Mammary epithelial cell (primary cell): ENCODE measurements at regions of chr12 and their contacts with region 1.

Region 1: DNA sequence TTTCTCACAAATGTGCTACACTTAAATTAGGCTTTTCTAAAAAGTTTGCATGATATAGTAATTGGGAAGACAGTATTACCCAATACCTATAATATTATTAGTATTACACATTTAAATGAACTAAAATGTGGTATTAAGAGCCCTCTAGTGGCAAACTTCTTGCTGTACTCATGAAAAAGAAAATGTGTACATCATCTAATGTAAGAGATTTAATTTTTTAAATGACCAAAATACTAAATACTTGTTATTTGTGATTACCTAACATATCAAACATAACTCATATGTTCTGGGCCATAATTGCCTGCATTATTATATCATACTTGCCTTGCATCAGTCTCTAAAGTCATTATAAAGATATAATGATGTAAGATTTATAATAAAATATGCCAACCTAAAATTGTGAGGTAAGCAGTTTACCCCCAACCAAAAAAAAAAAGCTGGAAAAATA is 64.2 kb downstream of the DNAI7 start:
- DNase-seq: peak; percentile 26
- H3K4me3 ChIP-seq: no peak overlapping the region
- H3K27ac ChIP-seq: no peak overlapping the region
- H3K4me1 ChIP-seq: peaks cover 12% of the 10 kb centered on the region
- H3K27me3 ChIP-seq: no peaks in the 10 kb centered on the region
- CTCF ChIP-seq: peak; percentile 49 to 56

Region 2: DNA sequence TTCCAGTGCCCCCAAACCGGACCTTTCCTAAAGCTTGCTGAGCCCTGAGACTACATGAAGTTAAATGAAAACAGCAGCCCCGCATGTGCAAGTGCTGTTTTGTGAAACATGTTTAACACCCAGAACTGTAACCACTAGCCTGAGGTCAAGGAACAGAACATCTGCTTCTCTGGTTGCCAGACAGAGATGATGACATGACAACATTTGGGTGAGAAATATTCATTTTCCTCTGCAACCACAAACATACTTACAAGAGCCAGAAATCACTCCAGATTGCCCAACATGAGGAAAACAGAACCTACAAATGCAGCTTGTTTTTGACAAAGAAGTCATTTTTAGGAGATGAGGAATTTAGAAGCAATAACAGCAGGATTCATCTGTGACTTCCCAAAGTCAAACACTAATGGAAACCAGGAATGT is 292.2 kb before region 1 on chr12:
- CTCF ChIA-PET with region 1: no interaction called
- dilution Hi-C with region 1: no loop called
- in situ Hi-C with region 1: loop called in 1 of 2 experiments (anchors 25 kb)
- intact Hi-C with region 1: no loop called
- DNase-seq: peak; percentile 35
- H3K4me3 ChIP-seq: no peak overlapping the region
- H3K27ac ChIP-seq: no peak overlapping the region
- H3K4me1 ChIP-seq: no peaks in the 10 kb centered on the region
- H3K27me3 ChIP-seq: no peaks in the 10 kb centered on the region
- CTCF ChIP-seq: no peak

Region 3: GRCh38 chr12:24852420-24852819 is 278.3 kb before region 1 on chr12:
- CTCF ChIA-PET with region 1: interaction called, 26 read pairs
- dilution Hi-C with region 1: no loop called
- in situ Hi-C with region 1: loop called in 1 of 2 experiments (anchors 25 kb)
- intact Hi-C with region 1: loop called (anchors 2 kb)
- DNase-seq: no peak
- H3K4me3 ChIP-seq: no peak overlapping the region
- H3K27ac ChIP-seq: no peak overlapping the region
- H3K4me1 ChIP-seq: peaks cover 5% of the 10 kb centered on the region
- H3K27me3 ChIP-seq: no peaks in the 10 kb centered on the region
- CTCF ChIP-seq: peak; percentile 34 to 56

Region 4: DNA sequence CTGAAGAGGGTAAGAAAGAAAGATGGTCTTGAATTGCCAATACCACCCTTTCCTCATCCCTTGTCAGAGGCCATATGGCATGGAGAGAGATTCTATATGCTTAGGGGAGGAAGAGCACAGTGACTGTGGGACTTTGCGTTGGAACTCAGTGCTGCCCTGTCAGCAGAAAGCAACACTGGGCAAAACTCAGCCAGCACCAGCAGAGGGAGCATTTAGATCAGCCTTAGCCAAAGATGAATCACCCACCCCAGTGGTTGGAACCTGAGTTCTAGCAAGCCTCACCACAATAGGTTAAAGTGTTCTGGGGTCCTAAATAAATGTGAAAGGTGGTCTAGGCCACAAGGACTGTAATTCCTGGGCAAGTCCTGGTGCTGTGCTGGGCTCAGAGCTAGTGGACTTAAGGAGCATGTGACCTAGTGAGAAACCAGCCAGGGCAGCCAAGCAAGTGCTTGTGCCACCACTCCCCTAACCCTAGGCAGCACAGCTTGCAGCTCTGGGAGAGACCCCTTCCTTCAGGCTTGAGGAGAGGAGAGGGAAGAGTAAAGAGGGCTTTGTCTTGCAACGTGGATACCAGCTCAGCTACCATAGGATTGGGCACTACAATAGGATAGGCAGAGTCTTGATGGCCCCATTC is 170.4 kb before region 1 on chr12:
- CTCF ChIA-PET with region 1: no interaction called
- dilution Hi-C with region 1: no loop called
- in situ Hi-C with region 1: no loop called
- intact Hi-C with region 1: loop called (anchors 1 kb)
- DNase-seq: peak; percentile 52
- H3K4me3 ChIP-seq: no peak overlapping the region
- H3K27ac ChIP-seq: no peak overlapping the region
- H3K4me1 ChIP-seq: no peaks in the 10 kb centered on the region
- H3K27me3 ChIP-seq: no peaks in the 10 kb centered on the region
- CTCF ChIP-seq: peak; percentile 81 to 84

Region 5: DNA sequence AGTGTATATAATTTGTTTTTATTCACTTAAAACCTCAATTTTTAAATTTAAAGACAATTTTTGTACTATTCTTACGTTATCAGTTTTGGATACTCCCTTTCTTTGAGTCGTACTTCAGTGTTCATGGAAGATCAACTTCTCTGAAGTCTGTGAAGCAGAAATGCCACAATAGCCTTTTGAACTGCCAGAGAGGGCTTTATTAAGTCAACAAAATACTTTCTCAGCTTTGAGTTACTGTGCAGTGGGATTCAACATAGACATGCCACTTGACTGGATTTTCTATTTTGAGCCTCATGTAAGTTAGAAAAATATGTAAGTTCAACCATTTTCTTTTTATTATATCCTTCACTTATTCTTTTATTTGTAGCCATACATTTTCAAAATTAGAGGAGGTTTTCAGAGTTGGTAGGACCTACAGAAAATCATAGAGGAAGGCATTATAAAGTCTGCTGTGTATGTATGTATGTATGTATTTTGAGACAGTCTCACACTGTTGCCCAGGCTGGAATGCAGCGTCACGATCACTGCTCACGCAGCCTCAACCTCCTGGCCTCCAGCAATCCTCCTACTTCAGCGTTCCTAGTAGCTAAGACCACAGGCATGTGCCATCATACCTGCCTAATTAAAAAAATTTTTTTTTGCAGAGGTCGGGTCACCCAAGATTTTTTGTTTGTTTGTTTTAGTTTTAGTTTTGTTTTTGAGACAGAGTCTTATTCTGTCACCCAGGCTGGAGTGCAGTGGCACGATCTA is 150.6 kb before region 1 on chr12:
- CTCF ChIA-PET with region 1: no interaction called
- dilution Hi-C with region 1: no loop called
- in situ Hi-C with region 1: loop called in 1 of 2 experiments (anchors 10 kb)
- intact Hi-C with region 1: no loop called
- DNase-seq: no peak
- H3K4me3 ChIP-seq: no peak overlapping the region
- H3K27ac ChIP-seq: no peak overlapping the region
- H3K4me1 ChIP-seq: no peaks in the 10 kb centered on the region
- H3K27me3 ChIP-seq: no peaks in the 10 kb centered on the region
- CTCF ChIP-seq: no peak

Region 6: GRCh38 chr12:24991209-24992049 is 139.3 kb before region 1 on chr12:
- CTCF ChIA-PET with region 1: interaction called, 3 read pairs
- dilution Hi-C with region 1: no loop called
- in situ Hi-C with region 1: loop called (anchors 5 to 10 kb)
- intact Hi-C with region 1: loop called (anchors 1 kb)
- DNase-seq: peak; percentile 50
- H3K4me3 ChIP-seq: no peak overlapping the region
- H3K27ac ChIP-seq: no peak overlapping the region
- H3K4me1 ChIP-seq: no peaks in the 10 kb centered on the region
- H3K27me3 ChIP-seq: no peaks in the 10 kb centered on the region
- CTCF ChIP-seq: peak; percentile 34 to 57

Region 7: GRCh38 chr12:25151476-25151875 is 20.7 kb after region 1 on chr12:
- CTCF ChIA-PET with region 1: interaction called, 7 read pairs
- dilution Hi-C with region 1: no loop called
- in situ Hi-C with region 1: no loop called
- intact Hi-C with region 1: loop called (anchors 2 kb)
- DNase-seq: peak; percentile 86
- H3K4me3 ChIP-seq: no peak overlapping the region
- H3K27ac ChIP-seq: no peak overlapping the region
- H3K4me1 ChIP-seq: peaks cover 6% of the 10 kb centered on the region
- H3K27me3 ChIP-seq: no peaks in the 10 kb centered on the region
- CTCF ChIP-seq: no peak

Region 8: GRCh38 chr12:25208554-25208953 is 77.8 kb after region 1 on chr12:
- CTCF ChIA-PET with region 1: no interaction called
- dilution Hi-C with region 1: no loop called
- in situ Hi-C with region 1: no loop called
- intact Hi-C with region 1: no loop called
- DNase-seq: no peak
- H3K4me3 ChIP-seq: no peak overlapping the region
- H3K27ac ChIP-seq: no peak overlapping the region
- H3K4me1 ChIP-seq: no peaks in the 10 kb centered on the region
- H3K27me3 ChIP-seq: no peaks in the 10 kb centered on the region
- CTCF ChIP-seq: no peak